Caco-2 (cell line): ENCODE measurements at regions of chr5 and their contacts with region 1.

Region 1: GRCh38 chr5:136249678-136250266 is 56.8 kb upstream of the SMIM32 start:
- DNase-seq: peak; percentile 67 to 70
- H3K4me3 ChIP-seq: no peak overlapping the region
- H3K4me3 Mint-ChIP-seq: no peak overlapping the region
- H3K27ac Mint-ChIP-seq: no peak overlapping the region
- H3K4me1 ChIP-seq: no peaks in the 10 kb centered on the region
- H3K4me1 Mint-ChIP-seq: no peaks in the 10 kb centered on the region
- H3K27me3 ChIP-seq: no peaks in the 10 kb centered on the region
- H3K27me3 Mint-ChIP-seq: peaks cover 17% of the 10 kb centered on the region
- CTCF ChIP-seq: peak; percentile 84 to 97

Region 2: DNA sequence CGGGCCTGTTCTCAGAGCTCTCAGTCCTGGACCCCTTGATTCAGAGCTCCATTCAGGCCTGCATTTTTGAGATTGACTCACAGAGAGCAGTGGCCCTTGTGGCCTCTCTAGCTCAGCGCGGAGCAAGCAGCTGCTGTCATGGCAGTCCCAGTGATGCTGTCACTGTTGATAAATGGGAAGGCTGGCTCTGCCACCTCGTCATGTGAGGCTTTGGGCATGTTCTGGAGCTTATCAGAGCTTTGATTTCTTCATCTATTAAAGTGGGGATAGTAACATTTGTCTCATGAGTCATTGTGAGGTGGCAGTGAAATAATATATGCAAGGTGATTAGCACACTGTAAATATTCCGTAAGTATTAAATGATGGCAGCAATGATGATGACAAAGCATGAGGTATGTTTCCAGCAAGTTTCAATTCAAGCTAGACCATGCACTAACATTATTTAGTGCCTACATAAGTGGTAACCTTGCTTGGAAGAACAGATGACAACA is 544.6 kb before region 1 on chr5:
- CTCF ChIA-PET with region 1: no interaction called
- POLR2A ChIA-PET with region 1: no interaction called
- intact Hi-C with region 1: no loop called
- DNase-seq: no peak
- H3K4me3 ChIP-seq: no peak overlapping the region
- H3K4me3 Mint-ChIP-seq: no peak overlapping the region
- H3K27ac Mint-ChIP-seq: no peak overlapping the region
- H3K4me1 ChIP-seq: no peaks in the 10 kb centered on the region
- H3K4me1 Mint-ChIP-seq: no peaks in the 10 kb centered on the region
- H3K27me3 ChIP-seq: no peaks in the 10 kb centered on the region
- H3K27me3 Mint-ChIP-seq: peaks cover 12% of the 10 kb centered on the region
- CTCF ChIP-seq: no peak

Region 3: DNA sequence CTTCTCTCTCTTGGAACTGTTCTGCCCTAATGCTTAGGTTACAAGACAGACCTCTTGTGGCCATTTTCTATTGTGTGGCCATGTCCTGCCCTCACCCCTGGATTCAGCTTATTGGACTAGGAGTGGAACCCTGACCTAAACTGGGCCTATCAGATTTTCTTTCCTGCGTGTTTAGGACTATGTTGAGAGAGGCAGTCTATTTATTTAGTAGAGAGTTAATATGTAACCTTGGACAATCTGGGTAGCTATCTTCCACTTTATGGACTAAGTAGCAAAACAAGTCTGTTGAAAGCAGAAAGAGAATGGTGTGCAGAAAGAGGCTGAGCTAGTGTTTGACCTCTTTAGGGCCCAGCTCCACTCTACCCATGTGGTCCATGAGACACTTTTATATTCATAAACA is 25.8 kb after region 1 on chr5:
- CTCF ChIA-PET with region 1: interaction called, 6 read pairs
- POLR2A ChIA-PET with region 1: no interaction called
- intact Hi-C with region 1: loop called (anchors 2 kb)
- DNase-seq: peak in 1 of 2 experiments; percentile 37
- H3K4me3 ChIP-seq: no peak overlapping the region
- H3K4me3 Mint-ChIP-seq: no peak overlapping the region
- H3K27ac Mint-ChIP-seq: no peak overlapping the region
- H3K4me1 ChIP-seq: peaks cover 14% of the 10 kb centered on the region
- H3K4me1 Mint-ChIP-seq: no peaks in the 10 kb centered on the region
- H3K27me3 ChIP-seq: 0 out of 2 replicates have a peak, but pooled peaks cover 2% of the 10 kb centered on the region
- H3K27me3 Mint-ChIP-seq: peaks cover 11% of the 10 kb centered on the region
- CTCF ChIP-seq: peak in 1 of 2 experiments; percentile 6

Region 4: GRCh38 chr5:136424835-136425584 is 175.2 kb after region 1 on chr5:
- CTCF ChIA-PET with region 1: interaction called, 4 read pairs
- POLR2A ChIA-PET with region 1: no interaction called
- intact Hi-C with region 1: loop called (anchors 1 kb)
- DNase-seq: peak; percentile 83 to 89
- H3K4me3 ChIP-seq: no peak overlapping the region
- H3K4me3 Mint-ChIP-seq: no peak overlapping the region
- H3K27ac Mint-ChIP-seq: no peak overlapping the region
- H3K4me1 ChIP-seq: no peaks in the 10 kb centered on the region
- H3K4me1 Mint-ChIP-seq: no peaks in the 10 kb centered on the region
- H3K27me3 ChIP-seq: no peaks in the 10 kb centered on the region
- H3K27me3 Mint-ChIP-seq: peaks cover 24% of the 10 kb centered on the region
- CTCF ChIP-seq: peak; percentile 84 to 93

Region 5: DNA sequence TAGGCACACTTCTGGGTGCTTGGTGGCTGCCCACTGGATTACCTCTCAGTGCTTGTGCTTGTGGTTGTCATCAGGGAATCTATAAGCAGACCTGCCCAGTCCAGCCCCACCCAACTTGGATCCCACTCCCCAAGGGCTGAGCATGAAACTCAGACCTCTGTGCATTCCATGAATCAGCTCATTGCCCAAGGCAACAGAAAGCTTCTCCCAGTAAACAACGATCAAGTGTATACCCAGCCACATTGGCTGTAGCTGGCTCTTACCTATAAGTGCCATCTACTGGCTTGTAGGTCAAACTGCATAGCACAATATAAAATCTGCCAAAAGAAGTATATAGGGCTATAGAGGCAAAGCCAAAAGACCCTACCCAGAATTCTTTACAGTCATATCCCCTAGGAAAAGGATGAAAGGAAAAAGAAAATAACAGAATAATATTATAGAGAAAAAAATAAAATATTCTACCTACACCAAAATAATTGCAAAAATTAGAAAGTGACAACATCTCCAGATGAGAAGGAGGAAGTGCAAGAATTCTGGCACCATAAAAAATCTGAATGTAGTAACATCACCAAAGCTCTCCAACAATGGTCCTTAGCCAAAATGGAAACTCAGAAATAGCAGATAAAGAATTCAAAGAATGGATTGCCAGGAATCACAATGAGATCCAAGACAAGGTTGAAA is 436.6 kb after region 1 on chr5:
- CTCF ChIA-PET with region 1: interaction called, 5 read pairs
- POLR2A ChIA-PET with region 1: no interaction called
- intact Hi-C with region 1: loop called (anchors 5 kb)
- DNase-seq: peak; percentile 36 to 48
- H3K4me3 ChIP-seq: no peak overlapping the region
- H3K4me3 Mint-ChIP-seq: no peak overlapping the region
- H3K27ac Mint-ChIP-seq: no peak overlapping the region
- H3K4me1 ChIP-seq: peaks cover 9% of the 10 kb centered on the region; the same call in 1 of the 2 replicates
- H3K4me1 Mint-ChIP-seq: peaks cover 11% of the 10 kb centered on the region
- H3K27me3 ChIP-seq: no peaks in the 10 kb centered on the region
- H3K27me3 Mint-ChIP-seq: peaks cover 2% of the 10 kb centered on the region
- CTCF ChIP-seq: peak; percentile 51 to 80